Posterior cingulate gyrus (tissue), 11 donors: ENCODE measurements at regions of chr16 and their contacts with region 1.

Region 1: DNA sequence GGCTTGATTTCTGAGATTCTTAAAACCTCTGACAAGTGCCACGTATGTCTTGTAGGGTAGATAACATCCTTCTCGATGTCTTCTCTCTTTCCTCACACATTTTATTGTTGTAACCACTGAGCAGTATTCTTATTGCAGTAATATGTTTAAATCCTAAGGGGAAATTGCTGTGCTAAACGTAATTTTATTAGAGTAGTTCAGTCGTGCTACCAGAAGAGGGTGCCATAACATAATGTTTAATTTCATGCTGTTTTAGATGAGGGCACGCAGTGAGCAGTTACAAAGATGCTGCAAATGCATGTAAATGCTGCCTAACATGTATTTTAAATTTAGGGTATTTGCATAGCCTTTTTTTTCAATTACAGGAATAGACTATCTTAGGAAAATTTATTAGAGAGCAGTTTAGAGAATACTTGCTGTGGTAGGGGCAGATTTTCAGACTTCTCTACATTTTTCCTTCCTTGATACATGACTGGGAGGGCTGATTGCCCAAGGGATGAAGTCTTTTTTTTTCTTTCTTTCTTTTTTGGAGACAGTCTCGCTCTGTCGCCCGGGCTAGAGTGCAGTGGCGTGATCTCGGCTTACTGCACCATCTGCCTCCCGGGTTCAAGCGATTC is 51.7 kb downstream of the GAN start:
- DNase-seq: no peak

Region 2: DNA sequence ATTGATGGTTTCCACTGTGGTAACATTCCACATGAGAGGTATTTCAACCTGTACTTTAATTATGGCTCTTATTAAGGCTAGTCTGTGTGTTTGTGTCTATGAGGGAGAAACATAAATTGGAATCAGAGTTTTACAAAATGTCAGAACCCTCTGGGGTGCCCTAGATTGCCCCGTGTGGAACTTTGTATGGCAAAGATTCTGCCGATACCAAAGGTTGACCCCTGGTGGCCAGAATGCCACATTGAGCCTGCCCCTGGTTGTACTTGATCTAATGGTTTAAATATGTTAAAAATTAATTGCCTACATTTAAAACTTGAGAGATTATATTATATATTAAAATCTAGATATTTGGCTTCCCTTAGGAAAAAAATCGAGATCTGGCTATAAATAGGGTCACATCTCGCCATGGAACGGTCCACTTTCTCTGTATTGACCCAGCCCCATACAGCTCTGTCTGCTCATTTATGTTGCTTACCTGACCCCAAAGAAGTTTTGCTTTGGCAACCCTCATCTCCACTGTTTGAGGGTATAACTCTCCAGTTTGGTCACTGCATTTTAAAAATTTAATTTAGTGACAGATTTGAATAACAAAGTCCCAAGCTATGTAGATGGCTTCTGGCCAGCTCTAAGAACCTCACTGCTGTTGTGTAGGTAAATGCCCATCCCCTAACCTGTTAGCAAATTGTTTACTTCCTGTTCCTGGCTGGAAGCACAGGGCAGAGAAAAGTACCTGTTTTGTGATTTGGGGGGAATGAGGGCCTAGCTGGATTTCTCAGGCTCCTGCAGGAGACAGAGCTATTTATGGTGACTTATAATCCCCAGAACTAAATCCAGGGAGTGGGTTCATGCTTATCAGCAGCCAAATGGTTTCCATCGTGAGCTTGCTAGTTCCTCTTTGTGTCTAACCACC is 507.7 kb after region 1 on chr16:
- intact Hi-C with region 1: loop called (anchors 10 kb)
- DNase-seq: peak in 5 of 10 donors; percentile 22 to 42 (median 29)

Region 3: GRCh38 chr16:82452004-82452756 is 1085.8 kb after region 1 on chr16:
- intact Hi-C with region 1: no loop called
- DNase-seq: no peak